Heart right ventricle (tissue), 16 donors: ENCODE measurements at regions of chr17 and their contacts with region 1.

Region 1: GRCh38 chr17:75205037-75205792 is at the start of gene NUP85:
- DNase-seq: peak; percentile 95 to 96
- ATAC-seq: peak; percentile 93 to 98 (median 96)
- H3K4me3 ChIP-seq: peak within 1 kb of the TSS; percentile 67 to 99 (median 86)
- H3K27ac ChIP-seq: peak within 1 kb of the TSS; percentile 92 to 98 (median 96)
- H3K4me1 ChIP-seq: peaks cover 5 to 28% (median 21%) of the 10 kb centered on the region in 9 donors
- H3K27me3 ChIP-seq: no peaks in the 10 kb centered on the region
- CTCF ChIP-seq: no peak
- total RNA-seq, gene NUP85: 16.2 to 28.4 (median 20.4) TPM

Region 2: GRCh38 chr17:75046582-75047289 is 158.5 kb before region 1 on chr17 and contains the starts of genes ATP5PD and KCTD2:
- intact Hi-C with region 1: loop called in 3 of 10 experiments (anchors 10 kb)
- DNase-seq: peak; percentile 96 to 97
- ATAC-seq: peak; percentile 98 to 99 (median 98)
- H3K4me3 ChIP-seq: peak within 1 kb of the TSS; percentile 74 to 100 (median 92)
- H3K27ac ChIP-seq: peak within 1 kb of the TSS; percentile 93 to 99 (median 98)
- H3K4me1 ChIP-seq: peaks cover 6 to 50% (median 31%) of the 10 kb centered on the region in 9 donors
- H3K27me3 ChIP-seq: no peaks in the 10 kb centered on the region
- CTCF ChIP-seq: peak in 2 of 9 donors; percentile 8 to 11
- total RNA-seq, gene ATP5PD: 678 to 1,003 (median 867) TPM
- total RNA-seq, gene KCTD2: 19.6 to 41.1 (median 29.6) TPM

Region 3: DNA sequence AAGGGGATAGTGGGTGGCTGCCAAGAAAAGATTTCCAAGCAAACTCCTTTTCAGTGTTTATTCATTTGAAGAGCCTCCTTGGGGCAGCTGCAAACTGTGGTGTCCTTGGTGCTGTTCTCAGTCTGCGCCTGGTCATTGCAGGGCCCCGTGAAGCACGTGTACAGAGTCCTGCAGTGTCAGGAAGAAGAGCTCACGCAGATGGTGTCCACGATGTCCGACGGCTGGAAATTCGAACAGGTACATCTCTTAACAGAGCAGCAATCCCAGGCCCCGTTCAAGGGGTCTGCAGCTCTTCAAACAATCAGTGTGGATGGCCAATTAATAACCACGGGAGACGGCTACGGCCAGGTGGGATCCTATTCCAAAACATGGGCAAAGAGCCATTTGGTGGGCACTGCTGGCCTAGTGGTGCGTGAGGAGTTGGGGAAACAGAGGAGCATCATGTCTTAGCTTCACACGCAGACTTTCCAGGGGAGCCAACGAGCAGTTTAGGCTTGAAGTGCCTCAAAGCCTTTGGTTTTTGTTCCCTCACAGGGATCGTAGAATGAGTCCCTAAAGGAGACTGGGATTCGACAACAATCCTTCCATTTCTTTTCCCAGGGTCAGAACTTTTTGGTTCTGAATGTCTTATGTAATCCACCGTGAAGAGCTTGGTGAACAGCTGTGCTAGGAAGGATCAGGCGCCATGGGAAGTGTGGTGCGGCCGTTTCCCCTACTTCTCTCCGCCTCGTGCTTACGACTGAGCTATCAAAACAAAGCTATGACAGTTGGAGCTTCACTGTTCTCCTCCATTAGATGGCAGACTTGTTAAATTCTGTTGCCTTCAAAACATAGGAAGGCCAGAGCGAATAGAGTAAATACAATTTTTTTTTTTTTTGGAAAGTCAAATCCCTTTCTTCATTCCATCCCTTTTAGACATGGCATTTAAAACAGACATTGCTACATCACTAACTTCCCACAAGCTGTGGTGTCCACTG is 145.6 kb before region 1 on chr17:
- intact Hi-C with region 1: loop called in 3 of 10 experiments (anchors 10 kb)
- DNase-seq: peak in 1 of 2 donors; percentile 55
- ATAC-seq: peak; percentile 50 to 94 (median 88)
- H3K4me3 ChIP-seq: no peak overlapping the region
- H3K27ac ChIP-seq: peak overlapping the region in 9 of 10 donors; percentile 40 to 76 (median 68)
- H3K4me1 ChIP-seq: peaks cover 0 to 20% (median 14%) of the 10 kb centered on the region in 9 donors
- H3K27me3 ChIP-seq: no peaks in the 10 kb centered on the region
- CTCF ChIP-seq: peak in 8 of 9 donors; percentile 9 to 69 (median 52)

Region 4: DNA sequence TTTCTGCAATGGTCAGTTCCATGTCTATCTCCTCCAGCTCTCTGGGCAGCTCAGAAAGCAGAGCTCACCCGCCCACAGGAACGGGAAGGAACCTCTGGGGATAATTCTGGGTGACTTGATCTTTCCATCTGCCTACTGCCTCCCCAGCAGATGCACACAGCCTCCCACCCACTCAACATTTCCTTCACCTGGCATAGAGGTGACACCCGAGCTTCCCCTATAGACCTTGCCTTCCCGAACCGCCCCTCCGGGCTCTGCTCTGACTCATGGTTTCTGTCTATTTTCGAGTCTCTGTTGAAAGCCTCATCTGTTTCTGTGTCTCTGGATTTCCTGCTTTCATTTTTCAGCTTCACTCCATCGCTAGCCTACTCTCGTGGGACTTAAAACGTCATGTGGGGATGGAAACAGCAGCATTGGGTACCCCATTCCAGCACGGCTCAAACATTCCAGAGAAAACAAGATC is 44.8 kb after region 1 on chr17:
- intact Hi-C with region 1: no loop called
- DNase-seq: no peak
- ATAC-seq: peak; percentile 43 to 83 (median 65)
- H3K4me3 ChIP-seq: peak overlapping the region in 6 of 10 donors; percentile 14 to 34 (median 26)
- H3K27ac ChIP-seq: peak overlapping the region in 9 of 10 donors; percentile 10 to 77 (median 45)
- H3K4me1 ChIP-seq: peaks cover 0 to 35% (median 22%) of the 10 kb centered on the region in 9 donors
- H3K27me3 ChIP-seq: no peaks in the 10 kb centered on the region
- CTCF ChIP-seq: no peak

Region 5: DNA sequence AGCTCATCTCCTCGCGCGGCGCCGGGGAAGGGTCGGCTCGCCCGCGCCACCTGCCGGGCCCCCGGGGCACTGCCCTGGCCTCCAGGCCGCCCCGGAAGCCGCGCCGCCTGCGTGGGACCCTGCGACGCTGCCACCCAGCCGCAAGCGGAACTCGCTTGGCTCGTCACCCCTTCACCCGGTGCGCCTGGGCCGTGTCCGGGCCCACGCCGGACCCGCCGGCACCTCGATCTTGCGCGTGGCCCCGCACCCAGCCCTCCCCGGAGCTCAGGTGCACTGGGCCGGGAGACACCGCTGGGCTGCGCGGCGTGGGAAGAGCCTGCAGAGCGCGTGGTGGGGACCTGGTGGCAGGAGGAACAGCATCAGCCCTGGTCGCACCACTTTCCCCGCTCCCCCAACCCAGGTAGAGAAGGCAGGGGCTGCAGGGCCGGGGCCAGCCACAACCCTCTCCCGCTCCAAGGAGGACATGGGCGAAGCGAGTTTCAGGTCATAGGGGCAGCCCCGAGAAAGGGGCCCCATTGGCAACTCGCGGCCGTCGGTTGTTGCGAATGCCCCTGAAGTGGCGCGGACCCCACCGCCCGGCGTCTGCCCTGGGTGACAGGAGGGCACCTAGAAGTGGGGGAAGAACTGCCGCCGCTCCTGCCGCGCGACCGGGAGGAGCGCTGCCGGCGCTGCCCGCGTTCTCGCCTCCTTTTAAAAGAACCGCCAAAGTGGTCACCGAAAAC is 66.2 kb after region 1 on chr17:
- intact Hi-C with region 1: no loop called
- DNase-seq: peak; percentile 78 to 83
- ATAC-seq: peak; percentile 60 to 90 (median 72)
- H3K4me3 ChIP-seq: peak overlapping the region; percentile 65 to 100 (median 96)
- H3K27ac ChIP-seq: peak overlapping the region; percentile 81 to 98 (median 91)
- H3K4me1 ChIP-seq: peaks cover 4 to 52% (median 37%) of the 10 kb centered on the region in 9 donors
- H3K27me3 ChIP-seq: no peaks in the 10 kb centered on the region
- CTCF ChIP-seq: peak; percentile 60 to 95 (median 81)